ENCODE measurements at regions of chr18 and their contacts with region 1.

Region 1: GRCh38 chr18:38940863-38941531 is 1375.4 kb upstream of the CELF4 start:
- ATAC-seq: peak in 2 of 8 experiments; percentile 20
- H3K4me3 ChIP-seq: no peak overlapping the region
- H3K27ac ChIP-seq: no peak overlapping the region
- H3K4me1 ChIP-seq: peaks cover 4 to 5% of the 10 kb centered on the region in 2 donors

Region 2: GRCh38 chr18:37588289-37588688 is 1352.7 kb before region 1 on chr18:
- in situ Hi-C with region 1: no loop called
- ATAC-seq: peak in 1 of 8 experiments; percentile 13
- H3K4me3 ChIP-seq: no peak overlapping the region
- H3K27ac ChIP-seq: no peak overlapping the region
- H3K4me1 ChIP-seq: no peaks in the 10 kb centered on the region

Region 3: GRCh38 chr18:39134255-39134654 is 193.3 kb after region 1 on chr18:
- in situ Hi-C with region 1: no loop called
- ATAC-seq: no peak
- H3K4me3 ChIP-seq: no peak overlapping the region
- H3K27ac ChIP-seq: no peak overlapping the region
- H3K4me1 ChIP-seq: no peaks in the 10 kb centered on the region

Region 4: GRCh38 chr18:39571511-39571910 is 630.5 kb after region 1 on chr18:
- in situ Hi-C with region 1: loop called in 1 of 9 experiments (anchors 25 kb)
- ATAC-seq: no peak
- H3K4me3 ChIP-seq: no peak overlapping the region
- H3K27ac ChIP-seq: no peak overlapping the region
- H3K4me1 ChIP-seq: peaks cover 2 to 5% of the 10 kb centered on the region in 2 donors

Region 5: GRCh38 chr18:39960550-39960949 is 1019.6 kb after region 1 on chr18:
- in situ Hi-C with region 1: no loop called
- ATAC-seq: no peak
- H3K4me3 ChIP-seq: no peak overlapping the region
- H3K27ac ChIP-seq: no peak overlapping the region
- H3K4me1 ChIP-seq: no peaks in the 10 kb centered on the region